ENCODE measurements at regions of chr17 and their contacts with region 1.

Region 1: DNA sequence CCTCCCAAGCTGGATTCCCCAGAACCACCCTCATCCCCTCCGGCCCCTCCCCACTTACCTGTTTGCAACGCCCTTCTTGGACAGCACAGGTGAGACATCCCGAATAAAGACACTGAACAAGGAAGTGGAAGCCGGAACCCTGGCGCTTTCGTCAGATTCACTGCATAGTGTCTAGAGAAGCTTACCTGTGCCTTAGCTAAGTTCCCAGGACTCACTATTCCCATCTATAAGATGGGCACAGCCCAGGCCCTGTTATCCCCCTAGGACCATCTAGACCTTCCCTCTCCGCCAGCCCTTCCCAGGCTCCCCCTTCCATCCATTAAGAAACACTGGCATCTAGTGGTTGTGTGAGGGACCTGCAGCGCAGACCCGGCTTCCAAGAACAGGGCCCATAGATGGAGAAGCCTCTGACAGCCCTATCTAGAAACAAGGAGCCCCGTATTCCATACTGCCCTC is 26.9 kb upstream of the RPL38 start:
- DNase-seq: peak; percentile 57
- H3K4me3 ChIP-seq: no peak overlapping the region
- H3K27ac ChIP-seq: no peak overlapping the region
- H3K4me1 ChIP-seq: no peaks in the 10 kb centered on the region
- H3K27me3 ChIP-seq: no peaks in the 10 kb centered on the region
- CTCF ChIP-seq: peak; percentile 70 to 83
- POLR2A ChIP-seq: no peak

Region 2: DNA sequence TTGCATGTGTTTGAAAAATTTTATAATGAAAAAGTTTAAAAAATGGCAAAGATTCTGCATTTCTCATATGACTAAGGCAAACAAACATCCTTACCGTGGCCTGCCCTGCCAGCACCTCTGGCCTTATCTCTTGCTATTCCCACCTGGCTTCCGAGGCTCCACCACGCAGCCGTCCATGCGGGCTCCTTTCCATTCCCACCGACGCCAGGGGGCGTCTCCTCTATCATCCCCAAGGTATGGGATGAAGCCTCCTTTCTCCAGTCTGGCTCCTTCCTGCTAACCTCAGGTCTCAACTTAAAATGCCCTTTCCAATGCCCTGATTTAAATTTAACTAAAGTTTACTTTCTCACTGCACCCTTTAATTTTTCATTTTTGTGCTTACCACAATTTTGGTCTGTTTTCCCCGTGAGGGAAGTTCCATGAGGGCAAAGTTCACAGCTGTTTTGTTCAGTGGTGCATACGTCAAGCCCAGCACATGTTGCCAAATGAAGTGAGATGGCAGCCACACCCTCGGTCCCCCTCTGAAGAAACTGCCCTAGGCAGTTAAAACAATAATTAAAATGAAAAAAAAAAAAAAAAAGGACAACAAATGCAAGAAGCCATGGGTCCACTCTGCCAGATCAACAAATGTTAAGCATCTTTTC is 519.0 kb before region 1 on chr17:
- CTCF ChIA-PET with region 1: no interaction called
- POLR2A ChIA-PET with region 1: no interaction called
- dilution Hi-C with region 1: no loop called
- intact Hi-C with region 1: loop called (anchors 2 kb)
- DNase-seq: no peak
- H3K4me3 ChIP-seq: no peak overlapping the region
- H3K27ac ChIP-seq: no peak overlapping the region
- H3K4me1 ChIP-seq: no peaks in the 10 kb centered on the region
- H3K27me3 ChIP-seq: no peaks in the 10 kb centered on the region
- CTCF ChIP-seq: no peak
- POLR2A ChIP-seq: no peak

Region 3: DNA sequence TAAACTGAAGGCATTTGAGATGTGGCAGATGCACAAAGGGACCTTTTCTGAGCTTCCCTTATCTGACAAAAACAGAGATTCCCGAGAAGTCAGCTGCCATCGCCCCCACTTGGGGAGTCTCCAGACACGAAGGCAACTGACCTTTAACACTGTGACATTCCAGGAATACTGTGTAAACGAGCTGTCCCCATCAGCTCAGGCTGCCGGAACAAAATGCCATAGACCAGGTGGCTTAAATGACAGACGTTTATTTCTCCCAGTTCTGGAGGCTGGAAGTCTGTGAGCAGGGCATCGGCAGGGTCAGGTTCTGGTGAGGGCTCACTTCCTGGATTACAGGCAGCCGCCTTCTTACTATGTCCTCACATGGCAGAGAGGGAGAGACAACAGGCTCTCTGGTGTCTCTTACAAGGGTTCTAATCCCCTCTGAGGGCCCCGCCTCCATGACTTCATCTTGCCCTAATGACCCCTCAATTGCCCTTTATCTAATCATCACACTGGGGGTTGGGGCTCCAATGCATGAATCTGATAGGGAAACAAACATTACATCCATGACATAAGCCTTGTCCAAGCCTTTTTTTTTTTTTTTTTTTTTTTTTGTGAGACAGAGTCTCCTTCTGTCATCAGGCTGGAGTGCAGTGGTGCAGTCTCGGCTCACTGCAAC is 151.6 kb before region 1 on chr17:
- CTCF ChIA-PET with region 1: no interaction called
- POLR2A ChIA-PET with region 1: no interaction called
- dilution Hi-C with region 1: no loop called
- intact Hi-C with region 1: no loop called
- DNase-seq: no peak
- H3K4me3 ChIP-seq: no peak overlapping the region
- H3K27ac ChIP-seq: no peak overlapping the region
- H3K4me1 ChIP-seq: no peaks in the 10 kb centered on the region
- H3K27me3 ChIP-seq: no peaks in the 10 kb centered on the region
- CTCF ChIP-seq: no peak
- POLR2A ChIP-seq: no peak

Measured in endothelial cell of umbilical vein (primary cell).